AG04449 (cell line): ENCODE measurements at regions of chr9 and their contacts with region 1.

Region 1: GRCh38 chr9:129139993-129140396 is 28.8 kb downstream of the PTPA start:
- DNase-seq: peak; percentile 99
- H3K4me3 ChIP-seq: peak overlapping the region; percentile 50
- CTCF ChIP-seq: no peak

Region 2: DNA sequence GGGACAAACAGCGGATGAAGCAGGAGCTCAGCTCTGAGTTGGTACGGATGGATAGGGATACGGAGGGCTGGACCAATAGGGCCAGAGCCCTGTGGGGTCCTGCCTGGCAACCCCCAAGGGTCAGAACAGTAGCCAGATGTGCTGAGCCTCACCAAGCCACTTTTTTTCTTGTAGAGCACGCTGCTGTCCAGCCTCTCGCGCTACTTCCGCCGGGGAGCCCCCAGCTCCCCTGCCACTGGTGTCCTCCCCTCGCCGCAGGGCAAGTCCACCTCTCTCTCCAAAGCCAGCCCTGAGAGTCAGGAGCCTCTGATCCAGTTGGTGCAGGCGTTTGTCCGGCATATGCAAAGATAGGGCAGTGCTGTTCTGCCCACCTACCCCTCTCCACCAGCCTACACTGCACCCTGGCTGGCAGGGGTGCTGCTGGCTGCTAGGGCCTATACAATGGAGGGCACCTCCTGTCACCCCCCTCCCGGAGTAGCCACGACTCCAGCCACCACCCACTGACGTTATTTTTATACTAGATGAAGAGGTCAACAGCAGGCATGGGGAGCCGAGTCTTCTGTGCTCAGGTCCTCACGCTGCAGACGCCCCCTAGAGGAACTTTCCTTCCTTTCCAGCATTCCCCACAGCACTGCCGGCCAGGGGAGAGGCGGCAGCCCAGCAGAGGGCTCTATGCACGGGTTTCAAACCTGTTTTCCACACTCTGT is 133.5 kb before region 1 on chr9:
- CTCF ChIA-PET with region 1: no interaction called
- POLR2A ChIA-PET with region 1: no interaction called
- DNase-seq: no peak
- H3K4me3 ChIP-seq: no peak overlapping the region
- CTCF ChIP-seq: peak; percentile 94

Region 3: DNA sequence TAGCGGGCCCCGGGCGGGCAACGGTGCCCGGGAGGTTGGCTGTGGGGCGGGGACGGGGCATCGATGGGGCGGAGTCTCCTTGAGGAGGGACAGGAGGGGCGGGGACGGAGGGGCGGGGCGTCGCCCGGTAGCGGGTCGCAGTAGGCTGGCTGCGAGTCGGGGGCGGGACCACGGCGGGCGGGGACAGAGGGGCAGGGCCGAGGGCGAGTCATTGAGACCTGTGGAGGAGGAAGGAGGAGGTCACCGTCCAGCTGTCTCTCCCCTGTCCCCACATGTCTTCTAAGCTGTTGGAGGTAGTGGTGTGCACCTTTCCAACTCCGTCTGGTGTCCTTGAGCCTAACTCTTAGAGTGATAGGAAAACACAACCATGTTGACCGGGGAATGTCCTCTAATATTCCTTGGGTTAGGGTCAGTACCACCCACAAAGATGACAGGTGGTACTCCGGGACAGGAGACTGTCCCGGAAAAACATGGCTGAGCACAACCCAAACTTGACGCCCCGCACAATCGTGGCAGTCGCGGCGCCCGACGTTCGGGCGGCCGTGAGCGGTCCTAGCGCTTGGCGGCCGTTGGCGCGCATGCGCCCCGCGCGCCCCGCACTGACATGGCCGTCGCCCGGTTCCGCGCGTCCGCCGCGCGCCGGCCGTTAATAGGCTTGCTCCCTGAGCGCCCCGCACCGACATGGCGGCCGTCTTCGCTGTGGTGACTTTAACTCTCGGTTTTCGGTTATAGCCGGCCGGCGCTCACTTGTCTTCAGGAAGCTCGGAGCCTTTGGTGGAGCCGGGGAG is 29.1 kb before region 1 on chr9 and contains the starts of genes CRAT and PTPA:
- CTCF ChIA-PET with region 1: interaction called, 10 read pairs
- POLR2A ChIA-PET with region 1: interaction called, 3 read pairs
- DNase-seq: no peak
- H3K4me3 ChIP-seq: peak within 1 kb of the TSS; percentile 93
- CTCF ChIP-seq: no peak

Region 4: DNA sequence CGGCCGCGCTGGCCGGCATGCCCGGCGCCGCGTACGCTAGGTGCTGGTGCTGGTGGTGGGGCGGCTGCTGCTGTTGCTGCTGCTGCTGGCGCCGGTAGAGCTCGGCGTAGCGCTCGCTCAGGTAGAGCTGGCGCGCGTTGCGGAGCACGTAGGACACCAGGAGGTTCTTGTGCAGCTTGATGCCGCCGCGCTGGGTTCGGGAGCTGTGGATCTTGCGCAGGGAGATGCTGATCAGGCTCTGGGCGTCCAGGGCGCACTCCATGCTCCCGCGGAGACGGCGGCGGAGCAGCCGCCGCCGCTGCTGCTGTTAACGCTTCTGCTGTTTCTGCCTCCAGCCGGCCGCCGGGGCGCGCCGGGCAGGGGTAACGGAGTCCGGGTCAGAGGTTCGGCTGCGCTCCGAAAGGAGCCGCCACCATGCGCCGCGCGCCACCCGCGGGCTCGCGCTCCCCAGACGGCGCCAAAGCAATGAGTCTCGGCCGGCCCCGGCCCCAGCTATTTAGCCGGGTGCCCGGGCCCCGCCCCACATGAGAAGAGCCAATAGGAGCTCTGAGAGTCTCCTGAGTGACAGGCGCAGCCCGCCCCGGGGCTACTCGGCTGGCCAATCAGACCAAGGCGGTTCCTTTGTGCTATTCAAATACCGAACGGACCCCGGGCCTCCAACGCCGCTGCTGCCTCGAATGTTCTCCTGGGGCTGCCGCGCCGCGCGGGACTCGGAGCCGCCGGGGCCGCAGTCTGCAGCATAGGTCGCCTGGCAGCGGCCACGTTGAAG is 38.0 kb after region 1 on chr9 and contains the start of gene IER5L:
- CTCF ChIA-PET with region 1: interaction called, 345 read pairs
- POLR2A ChIA-PET with region 1: interaction called, 233 read pairs
- DNase-seq: no peak
- H3K4me3 ChIP-seq: peak within 1 kb of the TSS; percentile 94
- CTCF ChIP-seq: no peak

Region 5: DNA sequence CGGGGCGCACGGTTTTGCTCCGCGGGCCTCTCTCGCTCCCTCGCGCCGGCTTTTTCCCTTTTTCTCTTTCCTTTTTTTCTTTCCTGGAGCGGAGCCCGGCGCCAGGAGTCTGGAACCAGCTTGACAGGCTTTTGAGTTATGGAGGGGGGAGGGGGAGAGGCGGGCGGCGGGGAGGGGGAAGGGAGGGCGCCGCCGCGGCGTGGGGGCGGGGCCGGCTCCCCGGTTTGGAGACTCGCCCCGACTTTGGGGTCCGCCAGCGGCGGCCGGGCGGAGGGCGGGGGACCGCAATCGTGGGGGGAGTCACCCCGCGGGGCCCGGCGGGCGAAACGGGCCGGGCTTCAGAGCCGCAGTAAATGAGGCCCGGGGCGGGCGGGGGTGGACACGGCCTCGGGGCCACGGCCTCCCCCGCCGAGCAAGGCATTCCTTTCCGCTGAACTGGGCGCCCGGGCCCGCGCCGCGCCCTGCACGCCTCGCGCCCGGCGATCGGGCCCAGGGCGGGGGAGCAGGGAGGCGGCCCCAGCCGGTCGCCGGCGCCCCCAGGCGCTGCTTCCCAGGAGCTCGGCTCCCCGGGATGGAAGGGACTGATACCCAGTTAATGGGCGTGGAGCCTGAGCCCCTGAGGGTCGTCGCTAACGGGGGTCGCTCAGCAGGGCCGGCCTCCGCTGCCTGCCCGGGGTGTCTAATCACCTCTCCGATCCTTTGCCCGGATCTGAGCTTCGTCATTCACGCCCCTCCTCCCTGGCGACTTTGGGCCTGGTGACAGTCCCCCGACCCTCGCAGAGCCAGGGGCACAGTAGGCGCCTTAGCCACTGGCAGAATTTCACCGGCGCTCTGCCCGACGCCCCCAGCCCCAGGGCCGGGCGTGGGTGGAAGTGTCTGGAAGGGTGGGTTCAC is 342.8 kb after region 1 on chr9:
- CTCF ChIA-PET with region 1: interaction called, 14 read pairs
- POLR2A ChIA-PET with region 1: interaction called, 28 read pairs
- DNase-seq: no peak
- H3K4me3 ChIP-seq: peak overlapping the region; percentile 37
- CTCF ChIP-seq: peak; percentile 28

Region 6: DNA sequence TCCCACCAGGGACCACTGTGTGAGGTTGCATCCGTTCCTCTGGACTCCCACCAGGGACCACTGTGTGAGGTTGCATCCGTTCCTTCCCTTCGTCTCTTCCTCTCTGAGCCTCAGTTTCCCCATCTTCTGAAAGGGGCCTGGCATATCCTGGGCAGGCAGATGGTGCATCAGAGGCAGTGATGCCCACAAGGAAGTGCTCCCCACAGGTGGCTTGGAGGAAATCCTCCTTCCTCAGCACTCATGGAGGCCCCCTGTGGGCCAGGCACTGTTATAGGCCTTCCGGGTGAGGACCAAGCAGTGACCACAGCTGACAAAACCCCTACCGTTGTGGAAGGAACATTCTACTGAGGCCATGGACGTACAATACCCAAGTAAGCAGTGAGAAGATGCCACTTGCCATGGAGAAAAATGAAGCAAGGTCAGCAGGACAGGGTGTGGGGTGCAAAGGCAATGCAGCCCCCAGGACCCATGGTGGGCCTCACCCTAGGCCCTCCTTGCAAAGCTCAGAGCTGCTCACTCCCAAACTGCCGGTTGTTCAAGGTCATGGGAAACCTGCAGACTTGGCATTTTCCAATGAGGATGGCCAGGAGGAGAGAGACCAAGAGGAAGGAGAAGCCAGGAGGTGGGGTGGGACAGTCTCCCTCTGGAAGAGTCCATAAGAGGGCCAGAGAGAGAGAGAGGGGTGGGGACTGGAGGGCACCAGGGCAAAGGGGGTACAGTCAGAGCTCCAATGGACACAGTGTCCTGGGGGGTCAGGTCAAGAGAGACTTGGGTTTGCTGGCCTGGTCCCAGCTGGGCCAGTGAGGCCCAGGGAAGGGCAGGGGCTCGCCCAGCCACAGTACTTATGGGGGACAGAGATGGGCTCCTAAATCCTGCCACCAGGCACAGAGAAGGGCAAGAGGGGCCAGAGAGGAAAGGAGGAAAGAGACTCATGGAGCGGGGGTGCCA is 429.8 kb after region 1 on chr9:
- CTCF ChIA-PET with region 1: interaction called, 10 read pairs
- POLR2A ChIA-PET with region 1: interaction called, 5 read pairs
- DNase-seq: no peak
- H3K4me3 ChIP-seq: peak overlapping the region; percentile 3
- CTCF ChIP-seq: peak; percentile 52

Region 7: GRCh38 chr9:129610473-129611301 is 470.7 kb after region 1 on chr9:
- CTCF ChIA-PET with region 1: interaction called, 286 read pairs
- POLR2A ChIA-PET with region 1: interaction called, 6 read pairs
- DNase-seq: no peak
- H3K4me3 ChIP-seq: peak overlapping the region; percentile 66
- CTCF ChIP-seq: peak; percentile 86

Region 8: DNA sequence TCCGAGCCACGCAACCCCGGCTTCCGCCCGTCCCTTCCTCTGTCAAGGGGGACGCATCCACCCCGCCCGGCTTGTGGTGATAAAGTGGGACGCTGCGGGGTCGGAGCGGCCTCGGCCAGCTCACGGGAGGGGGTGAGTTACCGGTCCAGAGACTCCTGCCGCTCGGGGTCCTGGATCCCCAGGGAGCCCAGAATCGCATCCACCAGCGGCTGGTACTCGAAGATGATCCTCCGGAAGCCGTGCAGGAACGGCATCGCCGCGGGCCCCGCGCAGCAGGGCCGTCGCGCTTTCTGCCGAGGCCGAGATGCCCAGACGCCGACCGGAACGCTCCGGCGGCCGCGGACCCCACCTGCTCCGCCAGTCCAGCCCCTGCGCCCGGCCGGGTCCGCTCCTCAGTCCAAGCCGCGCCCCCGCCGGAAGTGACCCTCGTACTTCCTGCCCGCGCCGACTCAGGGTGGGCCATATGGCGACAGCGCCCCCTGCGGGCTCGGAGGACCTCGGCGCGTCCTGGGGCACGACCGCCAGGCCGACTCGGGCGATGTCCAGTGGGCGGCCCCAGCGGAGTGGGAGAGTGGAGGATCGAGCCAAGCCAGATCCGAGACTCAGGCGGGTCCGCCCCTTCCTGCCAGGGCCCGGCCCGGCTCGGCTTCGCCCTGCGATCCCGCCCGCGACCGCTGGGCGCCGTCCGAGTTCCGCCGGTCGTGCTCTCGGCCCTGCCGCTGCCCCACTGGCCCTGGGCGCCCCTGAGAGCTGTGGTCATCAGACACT is 501.9 kb after region 1 on chr9 and contains the start of gene ASB6:
- CTCF ChIA-PET with region 1: interaction called, 10 read pairs
- POLR2A ChIA-PET with region 1: interaction called, 3 read pairs
- DNase-seq: peak; percentile 69
- H3K4me3 ChIP-seq: peak within 1 kb of the TSS; percentile 87
- CTCF ChIP-seq: peak; percentile 89